Ovary (tissue), 10 donors: ENCODE measurements at regions of chr14 and their contacts with region 1.

Region 1: DNA sequence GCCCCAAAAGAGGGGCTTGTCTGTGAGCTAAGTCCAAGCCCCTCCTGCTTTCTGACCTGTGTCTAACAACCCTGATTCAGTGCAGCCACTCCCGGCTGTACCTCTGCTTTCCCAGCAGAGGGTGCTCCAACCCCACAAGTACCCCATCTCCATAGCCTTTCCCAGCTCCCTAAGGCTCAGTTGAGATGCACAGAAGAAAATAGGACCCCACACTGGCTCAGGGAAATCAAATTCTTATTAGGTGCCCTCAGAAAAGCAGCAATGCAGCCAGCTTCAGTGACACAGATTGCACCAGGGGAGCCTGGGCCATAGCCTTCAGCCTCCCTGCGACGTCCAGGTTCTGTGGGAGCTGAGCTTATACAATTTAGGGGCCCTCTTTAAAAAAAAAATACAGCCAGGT is 49.9 kb downstream of the LRRC74A start:
- DNase-seq: peak; percentile 35 to 69 (median 61)
- H3K4me3 ChIP-seq: no peak overlapping the region
- H3K27ac ChIP-seq: no peak overlapping the region
- H3K4me1 ChIP-seq: no peaks in the 10 kb centered on the region
- H3K27me3 ChIP-seq: no peaks in the 10 kb centered on the region
- CTCF ChIP-seq: peak; percentile 72 to 91 (median 82)
- EP300 ChIP-seq: no peak
- POLR2A ChIP-seq: no peak

Region 2: DNA sequence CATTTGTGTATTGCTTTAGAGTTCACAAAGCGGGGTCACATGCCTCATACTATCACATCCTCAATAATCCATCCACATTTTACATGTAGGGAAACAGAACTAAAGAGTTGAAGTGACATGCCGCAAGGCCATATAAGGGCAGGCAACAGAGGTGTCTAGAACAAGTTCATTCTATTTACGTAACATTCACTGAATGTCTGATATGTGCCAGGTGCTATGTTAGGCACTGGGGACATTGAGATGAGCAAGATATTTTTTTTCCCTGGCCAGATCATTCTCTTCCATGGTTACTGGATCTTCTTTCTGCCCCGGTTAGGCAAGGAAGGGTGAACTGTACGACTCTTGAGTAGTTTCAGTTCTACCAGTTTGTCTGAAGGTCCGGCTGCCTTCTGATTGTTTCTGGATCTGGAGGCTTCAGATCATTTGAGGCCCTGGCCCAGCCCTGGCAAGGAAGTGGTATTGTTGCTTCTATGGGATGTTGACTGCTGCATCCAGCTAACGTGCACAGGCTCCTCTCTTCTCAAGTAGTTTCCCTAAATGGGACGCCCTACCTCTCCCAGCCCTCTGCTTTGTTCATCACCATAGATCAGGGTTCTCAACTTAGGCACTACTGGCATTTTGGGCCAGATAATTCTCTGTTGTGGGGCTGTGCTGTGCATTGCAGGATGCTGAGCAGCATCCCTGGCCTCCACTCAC is 712.3 kb before region 1 on chr14:
- intact Hi-C with region 1: no loop called
- DNase-seq: no peak
- H3K4me3 ChIP-seq: no peak overlapping the region
- H3K27ac ChIP-seq: no peak overlapping the region
- H3K4me1 ChIP-seq: no peaks in the 10 kb centered on the region
- H3K27me3 ChIP-seq: no peaks in the 10 kb centered on the region
- CTCF ChIP-seq: no peak
- EP300 ChIP-seq: no peak
- POLR2A ChIP-seq: no peak

Region 3: GRCh38 chr14:76793956-76794355 is 82.1 kb before region 1 on chr14:
- intact Hi-C with region 1: no loop called
- DNase-seq: no peak
- H3K4me3 ChIP-seq: no peak overlapping the region
- H3K27ac ChIP-seq: no peak overlapping the region
- H3K4me1 ChIP-seq: no peaks in the 10 kb centered on the region
- H3K27me3 ChIP-seq: no peaks in the 10 kb centered on the region
- CTCF ChIP-seq: no peak
- EP300 ChIP-seq: no peak
- POLR2A ChIP-seq: no peak

Region 4: DNA sequence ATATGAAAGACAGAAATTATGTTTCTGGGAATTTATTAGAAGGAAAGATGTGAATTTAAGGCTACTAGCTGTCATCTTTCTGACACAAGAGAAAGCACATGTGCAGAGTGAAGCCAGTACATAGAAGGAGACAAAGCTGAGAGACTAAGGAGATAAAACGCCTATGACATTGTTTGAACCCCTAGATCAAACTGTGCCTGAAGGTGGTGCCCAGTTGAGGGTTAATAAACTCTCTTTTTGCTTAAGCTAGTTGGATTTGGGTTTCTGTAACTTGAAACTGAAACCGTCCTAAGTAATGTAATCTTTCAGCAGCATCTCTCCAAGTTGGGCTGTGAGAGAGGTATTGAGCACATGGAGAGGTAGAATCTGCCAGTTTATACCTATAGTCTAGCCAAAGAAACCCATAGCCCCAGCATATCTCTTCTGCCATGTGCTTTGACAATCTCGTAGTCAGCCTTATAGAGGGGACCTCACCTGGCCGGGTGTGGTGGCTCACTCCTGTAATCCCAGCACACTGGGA is 34.4 kb after region 1 on chr14:
- intact Hi-C with region 1: loop called in 1 of 4 experiments (anchors 5 kb)
- DNase-seq: no peak
- H3K4me3 ChIP-seq: no peak overlapping the region
- H3K27ac ChIP-seq: no peak overlapping the region
- H3K4me1 ChIP-seq: peaks cover 6% of the 10 kb centered on the region
- H3K27me3 ChIP-seq: no peaks in the 10 kb centered on the region
- CTCF ChIP-seq: no peak
- EP300 ChIP-seq: no peak
- POLR2A ChIP-seq: no peak

Region 5: DNA sequence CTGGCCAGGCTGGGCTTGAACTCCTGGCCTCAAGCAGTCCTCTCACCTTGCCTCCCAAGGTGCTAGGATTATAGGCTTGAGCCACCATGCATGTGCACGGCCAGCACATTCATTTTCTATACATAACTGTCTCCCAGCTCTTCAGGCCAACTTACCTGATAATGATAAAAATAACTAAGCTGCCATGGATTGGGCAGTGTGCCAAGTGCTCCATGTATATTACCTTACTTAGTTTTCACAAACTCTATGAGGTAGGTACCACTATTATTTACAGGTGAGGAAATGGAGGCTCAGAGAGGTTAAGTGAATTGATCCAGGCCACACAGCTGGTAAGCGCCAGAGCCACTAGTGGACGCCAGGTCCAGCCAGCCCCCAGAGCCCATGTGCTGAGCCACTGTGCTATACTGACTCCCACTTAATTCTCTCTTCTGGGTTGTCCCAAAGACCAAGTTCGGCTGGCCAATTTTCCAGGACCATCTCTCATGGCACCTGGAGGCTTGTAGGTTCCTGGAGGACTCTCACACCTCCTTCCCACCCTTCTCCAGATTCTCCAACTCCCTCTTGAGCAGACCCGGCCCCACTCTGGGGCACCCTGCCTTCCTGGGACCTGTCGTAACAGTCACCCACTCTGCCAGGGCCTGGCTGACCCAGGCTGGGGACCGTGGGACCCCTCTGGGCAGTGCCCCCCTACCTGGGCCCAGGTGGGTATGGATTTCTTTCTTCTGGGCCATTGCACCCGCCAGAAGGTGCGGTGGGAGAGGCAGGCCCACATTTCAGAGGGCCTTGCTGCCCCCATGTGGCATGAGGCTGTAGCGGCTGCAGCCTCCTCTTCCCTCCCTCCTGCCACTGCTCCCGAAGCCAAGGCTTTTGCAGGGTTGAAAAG is 191.8 kb after region 1 on chr14:
- intact Hi-C with region 1: loop called (anchors 2 to 5 kb)
- DNase-seq: peak; percentile 61 to 80 (median 73)
- H3K4me3 ChIP-seq: no peak overlapping the region
- H3K27ac ChIP-seq: no peak overlapping the region
- H3K4me1 ChIP-seq: peaks cover 1% of the 10 kb centered on the region
- H3K27me3 ChIP-seq: no peaks in the 10 kb centered on the region
- CTCF ChIP-seq: peak; percentile 63 to 75 (median 73)
- EP300 ChIP-seq: no peak
- POLR2A ChIP-seq: no peak

Region 6: DNA sequence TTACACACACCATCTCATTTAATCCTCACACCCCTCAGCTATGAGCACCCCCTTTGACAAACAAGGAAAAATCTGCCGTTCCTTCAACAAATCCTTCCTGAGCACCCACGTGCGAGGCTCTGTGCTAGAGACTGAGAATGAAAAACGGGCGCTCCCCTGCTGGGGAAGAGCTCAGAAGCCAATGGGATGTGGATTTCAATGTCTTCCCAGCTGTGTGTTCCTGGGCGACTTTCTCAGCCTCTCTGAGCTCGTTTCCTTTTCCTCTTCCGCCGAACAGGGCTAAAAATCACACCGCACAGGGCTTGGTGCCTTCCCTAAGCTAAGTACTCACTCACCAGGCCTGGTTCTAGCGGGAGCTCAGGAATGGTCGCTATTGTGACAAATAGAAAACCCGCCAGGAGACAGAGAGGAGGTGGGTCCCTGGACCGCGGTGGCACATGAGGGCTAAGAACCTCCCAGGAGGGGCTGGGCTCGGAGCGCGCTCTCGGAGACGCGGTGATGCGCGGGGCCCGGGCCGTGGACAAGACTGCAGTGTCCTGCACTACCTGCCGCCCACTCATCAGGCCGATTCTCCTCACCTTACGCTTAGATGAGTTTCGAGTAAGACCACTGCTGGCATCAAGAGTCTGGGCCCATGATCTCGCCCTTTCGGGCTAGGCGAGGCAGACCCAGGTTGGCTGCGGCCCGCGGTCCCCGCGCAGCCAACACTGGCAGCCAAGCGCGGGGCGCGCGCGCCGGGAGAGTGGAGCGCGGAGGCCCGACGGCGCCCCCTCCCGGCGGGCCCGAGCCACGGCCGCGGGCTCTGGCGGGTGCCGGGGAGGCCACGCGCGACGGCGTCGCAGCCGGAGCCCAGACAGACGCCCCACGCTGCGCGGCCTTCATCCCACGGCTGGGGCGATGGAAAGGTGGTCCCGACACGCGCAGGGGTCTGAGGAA is 248.5 kb after region 1 on chr14:
- intact Hi-C with region 1: no loop called
- DNase-seq: peak in 4 of 5 donors; percentile 34 to 71 (median 40)
- H3K4me3 ChIP-seq: peak overlapping the region; percentile 45
- H3K27ac ChIP-seq: no peak overlapping the region
- H3K4me1 ChIP-seq: no peaks in the 10 kb centered on the region
- H3K27me3 ChIP-seq: no peaks in the 10 kb centered on the region
- CTCF ChIP-seq: peak in 2 of 3 donors; percentile 43 to 68
- EP300 ChIP-seq: no peak
- POLR2A ChIP-seq: no peak

Region 7: DNA sequence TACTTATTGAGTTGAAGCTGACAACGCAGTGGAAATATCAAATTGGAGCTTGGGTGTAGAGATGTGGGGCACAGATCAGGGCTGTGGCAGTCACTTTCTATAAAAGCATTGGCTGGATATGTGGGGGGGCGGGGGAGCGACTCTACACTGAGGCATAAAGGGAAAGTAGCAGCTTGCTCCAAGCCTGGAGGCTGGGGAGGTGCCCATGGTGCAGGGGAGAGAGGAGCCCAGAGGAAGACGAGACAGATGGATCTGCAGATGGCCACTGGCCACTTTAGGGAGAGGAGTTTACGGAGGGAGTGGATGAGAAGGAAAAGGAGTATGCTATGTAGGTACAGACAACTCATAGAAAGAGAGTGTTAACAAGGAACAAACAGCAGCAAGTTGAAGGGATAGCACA is 408.4 kb after region 1 on chr14:
- intact Hi-C with region 1: loop called in 1 of 4 experiments (anchors 10 kb)
- DNase-seq: no peak
- H3K4me3 ChIP-seq: no peak overlapping the region
- H3K27ac ChIP-seq: no peak overlapping the region
- H3K4me1 ChIP-seq: no peaks in the 10 kb centered on the region
- H3K27me3 ChIP-seq: no peaks in the 10 kb centered on the region
- CTCF ChIP-seq: no peak
- EP300 ChIP-seq: no peak
- POLR2A ChIP-seq: no peak

Region 8: DNA sequence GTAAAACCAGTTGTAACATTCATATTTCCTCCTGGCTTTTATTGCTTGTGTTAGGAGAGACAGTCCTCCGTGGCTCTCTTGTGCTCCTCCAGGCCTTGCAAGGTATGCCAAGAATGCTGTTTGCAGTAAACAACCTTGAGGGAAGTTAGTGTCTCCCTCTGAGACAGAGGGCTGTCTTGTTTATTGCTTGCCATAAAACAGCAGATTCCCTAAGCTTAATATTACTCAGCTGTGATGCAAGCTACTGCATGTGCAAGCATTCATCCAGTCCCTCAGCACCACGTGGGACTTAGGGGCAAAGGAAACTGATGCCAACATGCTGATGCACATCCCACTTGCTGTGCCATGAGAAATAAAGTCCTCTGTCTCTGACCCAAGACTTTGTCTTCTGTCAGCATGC is 438.0 kb after region 1 on chr14:
- intact Hi-C with region 1: loop called in 2 of 4 experiments (anchors 10 kb)
- DNase-seq: no peak
- H3K4me3 ChIP-seq: no peak overlapping the region
- H3K27ac ChIP-seq: no peak overlapping the region
- H3K4me1 ChIP-seq: peaks cover 9% of the 10 kb centered on the region
- H3K27me3 ChIP-seq: no peaks in the 10 kb centered on the region
- CTCF ChIP-seq: no peak
- EP300 ChIP-seq: no peak
- POLR2A ChIP-seq: no peak